Activated CD8-positive, alpha-beta T cell treated with anti-CD3 and anti-CD28 coated beads for 36 hours (primary cell): ENCODE measurements at regions of chr16 and their contacts with region 1.

Region 1: GRCh38 chr16:71412270-71413160 is 29.3 kb downstream of the TLE7 start:
- DNase-seq: peak; percentile 77
- ATAC-seq: peak; percentile 88
- H3K4me3 Mint-ChIP-seq: no peak overlapping the region
- H3K27ac Mint-ChIP-seq: no peak overlapping the region
- H3K4me1 Mint-ChIP-seq: peaks cover 9% of the 10 kb centered on the region
- H3K27me3 Mint-ChIP-seq: peaks cover 12% of the 10 kb centered on the region
- CTCF ChIP-seq: peak; percentile 85

Region 2: GRCh38 chr16:71426072-71426879 is 13.8 kb after region 1 on chr16:
- CTCF ChIA-PET with region 1: interaction called, 27 read pairs
- POLR2A ChIA-PET with region 1: interaction called, 3 read pairs
- intact Hi-C with region 1: no loop called
- DNase-seq: peak; percentile 83
- ATAC-seq: peak; percentile 88
- H3K4me3 Mint-ChIP-seq: peak overlapping the region; percentile 61
- H3K27ac Mint-ChIP-seq: peak overlapping the region; percentile 71
- H3K4me1 Mint-ChIP-seq: peaks cover 8% of the 10 kb centered on the region
- H3K27me3 Mint-ChIP-seq: peaks cover 27% of the 10 kb centered on the region
- CTCF ChIP-seq: no peak

Region 3: GRCh38 chr16:71440669-71441347 is 28.3 kb after region 1 on chr16:
- CTCF ChIA-PET with region 1: interaction called, 11 read pairs
- POLR2A ChIA-PET with region 1: no interaction called
- intact Hi-C with region 1: no loop called
- DNase-seq: peak; percentile 52
- ATAC-seq: no peak
- H3K4me3 Mint-ChIP-seq: no peak overlapping the region
- H3K27ac Mint-ChIP-seq: no peak overlapping the region
- H3K4me1 Mint-ChIP-seq: no peaks in the 10 kb centered on the region
- H3K27me3 Mint-ChIP-seq: peaks cover 13% of the 10 kb centered on the region
- CTCF ChIP-seq: no peak

Region 4: DNA sequence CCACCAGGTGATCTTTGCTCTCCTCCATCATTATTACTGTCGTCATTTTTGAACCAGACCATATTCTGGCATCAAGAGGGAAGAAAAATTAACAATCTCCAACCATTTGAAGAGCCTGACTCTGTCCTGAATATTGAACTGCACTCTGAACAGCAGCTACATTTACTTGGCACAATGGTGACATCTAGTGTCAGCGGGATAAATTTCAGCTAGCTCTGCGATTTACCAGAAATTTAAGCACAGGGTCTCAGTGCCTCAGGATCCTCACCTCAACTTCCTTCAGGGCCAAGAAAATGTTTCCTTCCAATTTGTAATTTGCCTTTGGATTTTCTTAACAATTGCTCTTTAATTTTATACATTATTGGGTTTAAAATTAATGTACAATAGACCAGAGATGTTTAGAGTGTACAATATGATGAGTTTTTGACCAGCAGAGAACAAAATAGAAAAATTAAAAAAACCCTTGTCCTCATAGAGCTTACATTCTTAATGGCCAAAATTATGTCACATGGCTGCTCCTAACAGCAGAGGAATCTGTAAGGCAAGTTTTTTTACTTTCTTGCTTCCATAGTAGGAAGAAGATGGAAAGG is 87.4 kb after region 1 on chr16:
- CTCF ChIA-PET with region 1: interaction called, 150 read pairs
- POLR2A ChIA-PET with region 1: interaction called, 3 read pairs
- intact Hi-C with region 1: loop called (anchors 1 kb)
- DNase-seq: peak; percentile 67
- ATAC-seq: peak; percentile 79
- H3K4me3 Mint-ChIP-seq: no peak overlapping the region
- H3K27ac Mint-ChIP-seq: no peak overlapping the region
- H3K4me1 Mint-ChIP-seq: no peaks in the 10 kb centered on the region
- H3K27me3 Mint-ChIP-seq: peaks cover 1% of the 10 kb centered on the region
- CTCF ChIP-seq: peak; percentile 80